Calu3 (cell line): ENCODE measurements at regions of chr1 and their contacts with region 1.

Region 1: GRCh38 chr1:51736702-51737101 is 119.8 kb downstream of the OSBPL9 start:
- DNase-seq: peak; percentile 45
- H3K4me3 Mint-ChIP-seq: peak overlapping the region; percentile 43
- H3K27ac Mint-ChIP-seq: peak overlapping the region; percentile 76
- H3K4me1 Mint-ChIP-seq: peaks cover 67% of the 10 kb centered on the region
- H3K27me3 Mint-ChIP-seq: no peaks in the 10 kb centered on the region
- CTCF ChIP-seq: no peak

Region 2: GRCh38 chr1:51636764-51637522 is 99.8 kb before region 1 on chr1:
- CTCF ChIA-PET with region 1: no interaction called
- intact Hi-C with region 1: loop called (anchors 5 kb)
- DNase-seq: peak; percentile 57
- H3K4me3 Mint-ChIP-seq: no peak overlapping the region
- H3K27ac Mint-ChIP-seq: peak overlapping the region; percentile 58
- H3K4me1 Mint-ChIP-seq: peaks cover 44% of the 10 kb centered on the region
- H3K27me3 Mint-ChIP-seq: no peaks in the 10 kb centered on the region
- CTCF ChIP-seq: no peak

Region 3: GRCh38 chr1:51750218-51750617 is 13.5 kb after region 1 on chr1:
- CTCF ChIA-PET with region 1: no interaction called
- intact Hi-C with region 1: no loop called
- DNase-seq: no peak
- H3K4me3 Mint-ChIP-seq: no peak overlapping the region
- H3K27ac Mint-ChIP-seq: no peak overlapping the region
- H3K4me1 Mint-ChIP-seq: no peaks in the 10 kb centered on the region
- H3K27me3 Mint-ChIP-seq: no peaks in the 10 kb centered on the region
- CTCF ChIP-seq: no peak